Aorta (tissue), 5 donors: ENCODE measurements at regions of chr10 and their contacts with region 1.

Region 1: DNA sequence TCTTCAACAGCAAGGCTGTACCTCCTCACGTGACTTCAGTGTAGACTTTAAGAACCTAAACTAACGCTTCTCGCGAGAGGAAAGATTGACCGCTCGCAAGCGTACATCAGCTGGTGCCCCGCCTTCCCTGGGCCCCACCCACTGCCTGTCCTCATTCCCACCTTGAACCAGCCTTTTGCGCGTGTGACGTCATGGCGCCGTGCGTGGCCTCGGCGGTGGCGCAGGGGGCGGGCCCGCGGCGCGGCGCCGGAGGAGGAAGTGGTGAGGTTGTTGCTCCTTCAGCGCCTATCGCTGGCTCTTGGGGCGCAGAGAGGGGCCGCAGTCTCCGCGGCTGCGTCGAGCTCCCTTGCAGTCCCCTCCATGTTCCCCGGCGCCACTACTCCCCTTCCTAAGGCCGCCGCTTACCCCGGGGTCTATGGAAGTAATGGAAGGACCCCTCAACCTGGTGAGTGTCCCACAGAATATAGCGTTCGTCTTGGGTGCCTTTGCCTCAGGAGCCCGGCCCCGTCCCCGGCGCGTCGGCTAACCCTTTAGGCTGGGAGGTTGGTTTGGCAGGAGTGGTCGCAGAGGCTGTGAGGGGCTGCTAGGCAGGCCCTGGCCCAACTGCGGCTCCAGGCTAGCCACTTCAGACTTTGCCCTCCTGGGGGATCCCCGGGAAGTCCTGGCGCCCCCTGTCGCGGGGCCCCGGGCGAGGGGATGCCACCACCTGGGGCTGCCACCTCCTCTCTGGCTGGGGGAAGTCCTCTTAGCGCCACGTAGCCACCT is at the start of gene NRBF2:
- DNase-seq: peak; percentile 98 to 99
- ATAC-seq: peak; percentile 100
- H3K4me3 ChIP-seq: peak within 1 kb of the TSS; percentile 70 to 81
- H3K27ac ChIP-seq: peak within 1 kb of the TSS in 1 of 2 donors; percentile 34
- H3K4me1 ChIP-seq: no peaks in the 10 kb centered on the region
- H3K27me3 ChIP-seq: no peaks in the 10 kb centered on the region
- total RNA-seq, gene NRBF2: 16.2 to 17.5 TPM

Region 2: GRCh38 chr10:62742536-62743061 is 390.6 kb before region 1 on chr10:
- intact Hi-C with region 1: no loop called
- DNase-seq: no peak
- ATAC-seq: no peak
- H3K4me3 ChIP-seq: no peak overlapping the region
- H3K27ac ChIP-seq: no peak overlapping the region
- H3K4me1 ChIP-seq: no peaks in the 10 kb centered on the region
- H3K27me3 ChIP-seq: no peaks in the 10 kb centered on the region

Region 3: DNA sequence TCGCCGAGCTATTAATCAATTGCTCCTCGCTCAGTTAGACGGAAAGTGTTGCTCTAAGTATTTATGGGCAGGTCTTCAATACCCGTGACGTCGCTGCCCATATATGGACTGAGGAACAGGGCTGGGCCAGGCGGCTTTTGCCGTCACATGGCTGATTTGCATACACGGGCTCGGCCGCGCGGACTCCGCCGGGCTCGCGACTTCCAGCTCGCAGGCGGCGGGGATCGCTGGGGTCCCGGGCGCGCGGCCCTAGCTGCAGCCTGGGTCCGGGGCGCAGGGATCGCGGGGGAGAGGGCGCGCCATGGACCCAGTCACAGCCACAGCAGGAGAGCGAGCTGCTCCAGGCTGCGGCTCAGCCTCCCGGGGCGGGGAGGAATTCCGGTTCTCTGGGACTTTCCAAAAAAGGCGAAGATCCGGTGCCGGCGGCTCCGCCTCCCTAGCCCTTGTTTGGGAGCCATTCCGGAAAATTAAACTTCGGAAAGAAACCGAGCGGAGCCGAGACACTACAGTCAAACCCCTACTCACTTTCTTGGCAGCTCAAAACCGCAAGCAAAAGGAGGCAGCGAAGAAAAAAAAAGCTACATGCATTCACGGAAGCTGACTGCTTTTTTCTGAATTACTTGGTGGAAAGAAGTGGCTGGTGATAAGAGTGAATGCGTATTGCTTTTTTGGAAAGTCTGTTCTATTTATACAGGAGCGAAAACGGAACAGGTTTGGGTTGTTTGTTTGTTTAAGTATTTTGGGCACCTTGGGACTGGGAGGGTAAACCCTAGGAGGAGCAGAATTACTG is 316.7 kb before region 1 on chr10 and contains the start of gene EGR2:
- intact Hi-C with region 1: loop called in 1 of 2 experiments (anchors 10 kb)
- DNase-seq: peak; percentile 96 to 97
- ATAC-seq: peak; percentile 92
- H3K4me3 ChIP-seq: peak within 1 kb of the TSS; percentile 51 to 74
- H3K27ac ChIP-seq: peak within 1 kb of the TSS; percentile 50 to 66
- H3K4me1 ChIP-seq: no peaks in the 10 kb centered on the region
- H3K27me3 ChIP-seq: no peaks in the 10 kb centered on the region
- total RNA-seq, gene EGR2: 11.4 to 23.0 TPM

Region 4: GRCh38 chr10:63054889-63055611 is 78.2 kb before region 1 on chr10:
- intact Hi-C with region 1: no loop called
- DNase-seq: no peak
- ATAC-seq: no peak
- H3K4me3 ChIP-seq: no peak overlapping the region
- H3K27ac ChIP-seq: no peak overlapping the region
- H3K4me1 ChIP-seq: no peaks in the 10 kb centered on the region
- H3K27me3 ChIP-seq: no peaks in the 10 kb centered on the region

Region 5: GRCh38 chr10:63115732-63116383 is 17.4 kb before region 1 on chr10:
- intact Hi-C with region 1: loop called in 1 of 2 experiments (anchors 2 kb)
- DNase-seq: peak; percentile 91 to 93
- ATAC-seq: peak; percentile 96
- H3K4me3 ChIP-seq: no peak overlapping the region
- H3K27ac ChIP-seq: peak overlapping the region; percentile 20 to 28
- H3K4me1 ChIP-seq: peaks cover 0 to 2% of the 10 kb centered on the region in 2 donors
- H3K27me3 ChIP-seq: no peaks in the 10 kb centered on the region